ENCODE measurements at regions of chr19 and their contacts with region 1.

Region 1: DNA sequence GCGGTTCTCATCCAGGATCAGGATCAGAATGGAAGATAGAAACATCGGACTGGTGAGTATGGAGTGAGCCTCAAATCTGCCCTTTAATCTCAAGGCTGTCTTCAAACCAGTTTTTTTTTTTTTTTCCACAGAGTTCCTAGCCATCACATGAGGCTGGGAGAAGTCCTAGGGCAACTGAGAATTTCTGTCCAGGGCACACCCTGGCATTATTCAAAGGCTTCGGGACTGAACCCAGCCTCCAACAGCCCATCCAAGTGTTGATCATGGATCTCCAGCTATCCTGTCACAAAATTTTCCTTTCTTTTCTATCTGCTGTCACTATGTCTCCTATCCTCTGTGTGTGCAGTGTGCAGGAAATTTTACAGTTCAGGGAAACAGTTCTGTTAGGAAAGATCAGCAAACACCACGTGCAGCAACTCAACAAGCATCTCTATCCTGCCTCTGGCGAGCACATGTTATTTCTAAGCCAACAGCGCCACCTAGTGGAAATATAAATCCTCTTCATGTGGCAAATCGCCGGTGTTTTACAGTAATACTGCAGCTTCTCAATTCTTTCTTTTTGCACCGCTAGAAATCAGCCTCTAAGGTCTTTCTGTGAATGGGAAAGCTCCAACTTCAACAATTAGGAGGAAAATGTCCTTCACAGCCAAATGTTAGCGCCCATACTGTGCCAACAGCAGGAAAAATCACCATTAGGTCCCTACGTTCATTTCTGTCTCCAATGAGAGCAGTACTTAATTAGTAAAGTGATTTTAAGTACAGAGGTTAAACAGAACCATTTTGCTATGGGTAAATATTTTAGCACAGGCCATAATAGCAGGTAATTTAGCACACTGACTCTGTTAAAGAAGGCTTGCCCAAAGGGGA is 21.4 kb upstream of the ZNF181 start:
- DNase-seq: peak in 1 of 2 donors; percentile 71
- H3K4me3 ChIP-seq: no peak overlapping the region
- CTCF ChIP-seq: peak in 1 of 3 donors; percentile 64
- POLR2A ChIP-seq: no peak

Region 2: DNA sequence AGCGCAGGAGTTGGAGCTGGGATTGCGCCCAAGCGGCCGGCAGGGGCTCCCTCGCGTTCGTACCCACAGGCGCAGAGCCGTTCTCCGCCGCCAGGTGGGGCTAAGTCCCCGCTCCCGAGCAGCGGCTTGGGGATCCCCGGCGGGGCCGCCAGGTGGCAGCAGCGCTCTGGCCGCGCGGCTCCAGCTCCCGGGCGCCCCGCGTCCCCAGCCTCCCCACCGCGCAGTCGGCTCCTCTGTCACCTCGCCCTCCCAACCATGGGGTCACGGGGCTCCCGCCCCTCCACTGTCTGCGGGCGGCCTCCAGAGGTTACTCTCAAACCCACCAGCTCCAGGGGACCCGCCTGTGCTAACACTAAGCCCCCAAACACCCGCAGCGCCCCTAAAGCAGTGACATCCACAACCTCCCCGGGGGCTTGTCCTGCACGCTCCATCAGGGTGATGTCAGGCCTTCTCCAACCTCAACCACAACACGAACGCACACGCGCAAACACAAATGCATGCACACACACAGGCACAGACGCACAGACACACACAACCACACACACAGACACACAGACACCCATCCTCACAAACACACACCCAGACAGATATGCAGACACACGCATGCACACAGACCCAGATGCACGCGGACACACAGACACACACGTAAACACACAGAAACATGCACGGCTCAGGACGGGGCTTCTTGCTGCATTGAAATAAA is 934.4 kb before region 1 on chr19:
- intact Hi-C with region 1: loop called (anchors 10 kb)
- DNase-seq: peak; percentile 55 to 96
- H3K4me3 ChIP-seq: no peak overlapping the region
- CTCF ChIP-seq: peak in 2 of 3 donors; percentile 93 to 99
- POLR2A ChIP-seq: no peak

Region 3: DNA sequence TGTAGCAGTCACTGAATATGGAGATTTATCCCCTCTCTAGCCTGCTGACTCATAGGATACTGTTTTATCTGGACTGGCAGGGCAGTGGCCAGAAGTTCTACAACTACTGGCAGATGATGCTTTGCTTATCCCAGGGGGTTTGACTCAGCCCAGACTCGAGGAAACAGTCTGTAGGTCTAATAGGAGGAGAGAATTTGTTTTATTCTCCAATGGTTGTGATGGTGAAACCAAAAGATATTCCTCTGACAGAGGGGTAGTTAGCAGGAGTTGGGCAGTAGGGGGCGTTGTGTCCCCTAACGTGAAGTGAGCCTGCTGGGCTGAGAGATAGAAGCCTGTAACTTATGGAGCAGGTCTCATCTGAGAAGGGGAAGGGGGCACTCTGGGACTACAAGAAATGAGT is 156.1 kb before region 1 on chr19:
- intact Hi-C with region 1: loop called (anchors 5 kb)
- DNase-seq: no peak
- H3K4me3 ChIP-seq: no peak overlapping the region
- CTCF ChIP-seq: no peak
- POLR2A ChIP-seq: no peak

Region 4: DNA sequence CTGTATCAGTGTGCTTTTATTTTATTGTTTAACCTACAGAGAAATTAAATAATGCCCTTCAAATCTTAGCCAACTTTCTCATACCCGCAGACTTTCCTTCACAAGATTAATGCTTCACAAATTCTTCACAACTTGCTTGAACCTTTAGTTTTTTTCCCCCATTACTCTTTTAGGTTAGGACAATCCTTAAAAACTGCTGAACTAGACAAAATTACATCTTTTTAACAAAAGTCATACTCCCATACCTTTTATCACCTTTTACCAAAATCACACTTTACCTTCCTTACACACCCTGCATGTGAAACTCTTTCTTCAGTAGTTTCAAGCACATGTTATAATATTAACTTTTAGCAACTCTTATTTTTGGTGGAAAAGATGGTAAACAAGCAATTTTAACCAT is 94.2 kb before region 1 on chr19:
- intact Hi-C with region 1: no loop called
- DNase-seq: no peak
- H3K4me3 ChIP-seq: no peak overlapping the region
- CTCF ChIP-seq: no peak
- POLR2A ChIP-seq: no peak

Region 5: DNA sequence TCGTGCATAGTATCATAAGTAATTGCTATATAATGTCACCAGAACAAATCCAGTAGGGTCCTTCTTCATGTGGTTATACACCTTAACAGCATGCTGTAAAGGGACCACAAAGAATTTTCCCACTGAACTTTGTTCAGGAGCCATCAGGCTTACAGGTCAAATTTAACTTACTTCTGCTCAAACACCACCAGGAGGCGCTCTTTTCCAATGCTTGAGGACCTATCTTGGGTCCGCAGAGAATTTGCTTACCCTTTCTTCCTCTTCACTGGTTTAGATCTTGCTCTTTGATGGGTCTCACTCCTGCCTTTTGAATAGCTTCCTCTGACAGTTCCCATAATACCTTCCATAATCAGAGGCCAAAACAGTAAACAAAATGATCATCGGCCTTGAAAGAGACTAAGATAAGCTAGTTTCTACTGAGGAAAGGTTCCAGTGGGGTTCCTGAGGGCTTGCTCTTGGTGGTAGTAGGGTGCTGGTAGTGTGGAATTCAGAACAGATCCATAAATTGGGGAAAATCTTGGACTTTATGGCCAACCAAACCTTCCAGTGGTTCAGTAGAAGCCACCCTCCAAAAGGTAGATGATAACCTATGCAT is 73.0 kb before region 1 on chr19:
- intact Hi-C with region 1: loop called (anchors 10 kb)
- DNase-seq: no peak
- H3K4me3 ChIP-seq: no peak overlapping the region
- CTCF ChIP-seq: no peak
- POLR2A ChIP-seq: no peak

Region 6: DNA sequence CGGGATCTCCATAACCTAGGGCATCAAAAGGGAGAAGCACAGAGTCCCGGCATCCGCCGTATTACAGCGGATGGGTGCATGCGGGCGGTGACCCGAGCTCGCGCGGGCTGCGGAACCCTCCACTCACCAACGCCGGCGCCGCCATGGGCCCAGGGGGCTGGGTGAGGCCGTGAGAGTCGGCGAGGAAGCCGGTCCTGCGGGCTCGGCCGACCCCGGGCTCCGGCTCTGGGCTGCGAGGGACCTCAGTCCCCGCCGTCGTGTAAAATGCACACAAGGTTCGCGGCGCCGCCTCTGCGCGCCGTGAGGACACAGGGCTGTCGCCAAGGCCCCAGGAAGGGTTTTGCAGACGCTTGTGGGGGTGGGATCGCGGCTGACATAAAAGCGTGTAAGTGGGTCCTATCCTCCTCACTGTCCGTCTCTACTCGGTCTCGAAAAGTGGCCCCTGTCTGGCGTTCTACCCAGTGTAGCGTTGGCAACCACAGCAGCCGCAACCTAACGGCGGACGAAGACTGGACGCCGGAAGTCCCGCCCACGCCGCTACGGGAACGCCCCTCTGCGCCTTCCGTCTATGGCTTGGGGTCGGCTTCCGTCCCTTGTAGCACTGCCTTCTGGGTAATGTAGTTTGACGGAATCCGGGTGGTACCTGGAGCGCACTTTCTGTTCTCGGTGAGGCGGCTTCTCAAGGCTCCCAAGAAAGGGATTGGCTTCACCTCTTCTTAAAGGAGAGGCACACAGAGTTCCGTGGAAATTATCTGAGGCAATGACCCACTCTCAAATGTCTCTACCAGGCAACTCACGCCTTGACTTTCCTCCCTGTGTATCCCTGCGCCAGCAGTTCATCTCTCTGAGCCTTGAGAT is 60.3 kb after region 1 on chr19 and contains the start of gene ZNF599:
- intact Hi-C with region 1: no loop called
- DNase-seq: peak; percentile 87 to 98
- H3K4me3 ChIP-seq: peak within 1 kb of the TSS; percentile 79
- CTCF ChIP-seq: no peak
- POLR2A ChIP-seq: no peak
- total RNA-seq, gene ZNF599: 4.5 to 13.3 (median 6.9) TPM

Measured in lower leg skin (tissue), 4 donors.